Thyroid gland (tissue), 4 donors: ENCODE measurements at regions of chr1 and their contacts with region 1.

Region 1: GRCh38 chr1:55375617-55376258 is 160.6 kb upstream of the USP24 start:
- DNase-seq: peak; percentile 35 to 47
- H3K4me3 ChIP-seq: no peak overlapping the region
- H3K27ac ChIP-seq: no peak overlapping the region
- H3K4me1 ChIP-seq: no peaks in the 10 kb centered on the region
- H3K27me3 ChIP-seq: no peaks in the 10 kb centered on the region
- CTCF ChIP-seq: peak; percentile 78 to 97 (median 82)
- POLR2A ChIP-seq: no peak

Region 2: GRCh38 chr1:56156971-56157876 is 781.5 kb after region 1 on chr1:
- intact Hi-C with region 1: loop called (anchors 10 kb)
- DNase-seq: peak; percentile 74 to 75
- H3K4me3 ChIP-seq: no peak overlapping the region
- H3K27ac ChIP-seq: peak overlapping the region; percentile 63 to 76 (median 66)
- H3K4me1 ChIP-seq: peaks cover 36 to 40% of the 10 kb centered on the region in 2 donors
- H3K27me3 ChIP-seq: no peaks in the 10 kb centered on the region
- CTCF ChIP-seq: no peak
- POLR2A ChIP-seq: no peak

Region 3: GRCh38 chr1:56584910-56585528 is 1209.3 kb after region 1 on chr1:
- intact Hi-C with region 1: loop called (anchors 5 kb)
- DNase-seq: peak; percentile 21 to 32
- H3K4me3 ChIP-seq: no peak overlapping the region
- H3K27ac ChIP-seq: no peak overlapping the region
- H3K4me1 ChIP-seq: peaks cover 16 to 28% of the 10 kb centered on the region in 2 donors
- H3K27me3 ChIP-seq: no peaks in the 10 kb centered on the region
- CTCF ChIP-seq: peak; percentile 51 to 98 (median 82)
- POLR2A ChIP-seq: no peak